ENCODE measurements at regions of chr6 and their contacts with region 1.

Region 1: DNA sequence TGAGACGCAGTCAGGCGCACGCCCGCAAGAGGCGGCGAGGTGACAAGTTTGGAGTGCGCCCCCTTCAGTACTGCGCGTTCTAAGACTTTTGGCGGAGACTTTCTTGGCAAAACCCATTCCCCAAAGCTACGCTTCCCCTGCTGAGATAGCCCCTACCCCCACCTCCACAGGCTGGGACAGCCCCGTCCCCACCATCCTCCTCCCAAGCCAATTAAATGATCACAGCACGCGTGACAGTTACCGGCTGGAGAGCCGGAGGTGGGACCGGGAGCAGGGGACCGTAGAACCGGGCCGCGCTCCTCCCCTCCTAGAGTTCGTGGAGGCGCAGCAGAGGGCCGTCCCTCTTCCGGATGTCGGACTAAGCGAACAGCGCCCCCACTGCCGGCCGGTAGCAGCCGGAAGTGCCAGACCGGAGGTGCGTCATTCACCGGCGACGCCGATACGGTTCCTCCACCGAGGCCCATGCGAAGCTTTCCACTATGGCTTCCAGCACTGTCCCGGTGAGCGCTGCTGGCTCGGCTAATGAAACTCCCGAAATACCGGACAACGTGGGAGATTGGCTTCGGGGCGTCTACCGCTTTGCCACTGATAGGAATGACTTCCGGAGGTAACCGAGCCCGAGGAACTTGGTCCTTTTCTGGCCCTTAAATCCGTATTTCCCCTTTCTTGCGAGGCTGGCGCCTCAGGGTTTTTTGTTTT is at the start of gene TOMM6:
- DNase-seq: peak; percentile 98
- ATAC-seq: peak; percentile 84
- H3K4me3 ChIP-seq: peak within 1 kb of the TSS; percentile 85 to 99 (median 91)
- H3K4me3 Mint-ChIP-seq: peak within 1 kb of the TSS; percentile 97
- H3K27ac ChIP-seq: peak within 1 kb of the TSS; percentile 75 to 95
- H3K27ac Mint-ChIP-seq: peak within 1 kb of the TSS; percentile 98
- H3K4me1 ChIP-seq: peaks cover 17 to 27% of the 10 kb centered on the region in 2 donors
- H3K4me1 Mint-ChIP-seq: peaks cover 32% of the 10 kb centered on the region
- H3K27me3 ChIP-seq: no peaks in the 10 kb centered on the region
- H3K27me3 Mint-ChIP-seq: no peaks in the 10 kb centered on the region
- CTCF ChIP-seq: peak; percentile 85
- total RNA-seq, gene TOMM6: 117 and 130 TPM in 2 replicates

Region 2: DNA sequence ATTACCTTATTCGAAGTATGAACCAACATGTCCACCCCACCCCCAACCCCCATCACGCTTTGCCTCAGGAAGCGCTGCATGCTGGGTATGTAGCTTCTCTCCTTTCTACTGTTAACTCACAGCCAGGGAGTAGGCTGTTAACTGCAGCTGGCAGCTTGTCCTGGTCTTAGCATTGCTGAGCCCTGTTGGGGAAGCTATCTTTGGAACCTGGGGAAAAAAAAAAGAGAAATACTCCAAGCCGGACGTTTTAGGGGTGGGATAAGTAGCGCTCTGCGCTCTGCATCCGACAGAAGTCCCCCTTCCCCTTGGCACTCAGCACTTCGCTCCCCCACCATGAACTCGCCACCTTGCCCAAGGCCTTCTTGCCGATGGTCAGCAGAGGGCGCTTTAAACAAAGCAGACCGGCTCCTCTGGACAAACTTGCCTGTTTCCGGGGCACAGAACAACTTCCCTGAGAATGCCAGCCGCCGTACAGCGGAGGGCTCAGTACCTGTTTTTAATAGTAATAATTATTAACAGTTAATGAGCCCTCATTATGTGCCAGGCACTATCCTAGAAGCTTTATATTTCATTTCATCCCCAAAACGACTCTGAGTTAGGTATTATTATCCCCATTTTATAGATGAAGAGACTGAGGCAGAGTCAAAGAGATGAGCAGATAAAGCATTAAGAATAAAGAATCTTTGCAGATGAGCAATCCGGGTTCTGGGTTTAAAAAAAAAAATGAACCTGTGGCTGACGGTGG is 184.3 kb before region 1 on chr6:
- CTCF ChIA-PET with region 1: interaction called, 15 read pairs
- POLR2A ChIA-PET with region 1: no interaction called
- intact Hi-C with region 1: no loop called
- DNase-seq: peak; percentile 85
- ATAC-seq: peak; percentile 90
- H3K4me3 ChIP-seq: peak overlapping the region in 1 of 5 experiments; percentile 11
- H3K4me3 Mint-ChIP-seq: peak overlapping the region; percentile 41
- H3K27ac ChIP-seq: no peak overlapping the region
- H3K27ac Mint-ChIP-seq: no peak overlapping the region
- H3K4me1 ChIP-seq: peaks cover 4 to 13% of the 10 kb centered on the region in 2 donors
- H3K4me1 Mint-ChIP-seq: peaks cover 10% of the 10 kb centered on the region
- H3K27me3 ChIP-seq: peaks cover 0 to 3% (median 0%) of the 10 kb centered on the region in 4 experiments
- H3K27me3 Mint-ChIP-seq: peaks cover 11% of the 10 kb centered on the region
- CTCF ChIP-seq: peak; percentile 82

Region 3: DNA sequence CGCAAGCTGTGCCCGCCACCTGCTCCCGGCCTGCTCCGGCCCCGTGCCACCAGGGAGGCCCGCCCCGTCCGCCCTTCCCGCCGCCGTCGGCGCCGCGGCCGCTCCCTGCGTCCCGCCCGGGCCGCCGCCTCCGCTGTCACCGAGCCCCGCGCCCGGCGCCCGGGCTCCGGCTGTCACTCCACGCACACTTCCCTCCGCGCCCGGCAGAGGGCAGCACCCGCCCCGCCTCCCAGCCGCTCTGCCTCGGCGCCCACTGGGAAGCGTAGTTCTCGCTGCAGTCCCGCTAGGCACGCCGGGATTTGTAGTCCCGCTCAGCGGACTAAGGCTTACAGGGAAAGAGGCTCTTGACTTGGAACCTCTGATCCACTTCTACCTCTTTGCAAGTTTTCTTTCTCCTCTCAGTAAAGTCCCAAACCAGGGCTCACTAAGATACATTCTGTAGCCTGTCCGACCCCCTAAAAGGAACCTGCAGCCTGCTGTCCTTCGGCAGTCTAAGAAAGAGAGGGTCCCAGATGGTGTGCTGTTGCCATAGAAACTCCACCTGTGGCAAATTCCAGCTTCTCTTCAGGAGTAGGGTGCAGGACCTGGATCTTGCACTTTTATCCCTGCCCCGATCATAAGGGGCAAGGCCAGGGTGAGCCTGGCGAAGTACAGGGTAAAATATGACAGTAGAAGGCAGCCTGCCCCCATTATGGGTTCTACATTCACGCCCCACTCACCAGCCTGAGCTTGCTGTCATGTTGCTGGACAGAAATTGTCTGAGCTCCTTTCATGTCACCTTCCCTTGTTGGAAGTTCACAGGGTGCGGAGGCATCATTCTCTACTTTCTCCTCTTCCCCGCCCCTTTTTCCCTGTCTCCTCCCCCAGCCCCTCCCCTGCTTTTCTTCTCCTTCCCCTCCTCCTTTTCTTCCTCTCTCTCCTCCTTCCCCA is 51.7 kb before region 1 on chr6 and contains the start of gene TFEB:
- CTCF ChIA-PET with region 1: interaction called, 17 read pairs
- POLR2A ChIA-PET with region 1: interaction called, 16 read pairs
- intact Hi-C with region 1: loop called (anchors 1 kb)
- DNase-seq: peak; percentile 94
- ATAC-seq: peak; percentile 51
- H3K4me3 ChIP-seq: peak within 1 kb of the TSS in 4 of 5 experiments; percentile 68 to 89 (median 80)
- H3K4me3 Mint-ChIP-seq: peak within 1 kb of the TSS; percentile 93
- H3K27ac ChIP-seq: peak within 1 kb of the TSS; percentile 81 to 89
- H3K27ac Mint-ChIP-seq: peak within 1 kb of the TSS; percentile 95
- H3K4me1 ChIP-seq: peaks cover 23 to 36% of the 10 kb centered on the region in 2 donors
- H3K4me1 Mint-ChIP-seq: peaks cover 32% of the 10 kb centered on the region
- H3K27me3 ChIP-seq: no peaks in the 10 kb centered on the region
- H3K27me3 Mint-ChIP-seq: no peaks in the 10 kb centered on the region
- CTCF ChIP-seq: peak; percentile 80
- total RNA-seq, gene TFEB: 147 and 148 TPM in 2 replicates

Region 4: GRCh38 chr6:41920921-41921711 is 133.7 kb after region 1 on chr6 and contains the starts of genes BYSL and MED20:
- CTCF ChIA-PET with region 1: interaction called, 68 read pairs
- POLR2A ChIA-PET with region 1: interaction called, 7 read pairs
- intact Hi-C with region 1: loop called (anchors 1 kb)
- DNase-seq: peak; percentile 98
- ATAC-seq: peak; percentile 93
- H3K4me3 ChIP-seq: peak within 1 kb of the TSS; percentile 67 to 99 (median 97)
- H3K4me3 Mint-ChIP-seq: peak within 1 kb of the TSS; percentile 98
- H3K27ac ChIP-seq: peak within 1 kb of the TSS; percentile 91 to 96
- H3K27ac Mint-ChIP-seq: peak within 1 kb of the TSS; percentile 98
- H3K4me1 ChIP-seq: peaks cover 26 to 29% of the 10 kb centered on the region in 2 donors
- H3K4me1 Mint-ChIP-seq: peaks cover 47% of the 10 kb centered on the region
- H3K27me3 ChIP-seq: no peaks in the 10 kb centered on the region
- H3K27me3 Mint-ChIP-seq: no peaks in the 10 kb centered on the region
- CTCF ChIP-seq: peak; percentile 93
- total RNA-seq, gene BYSL: 10.5 and 11.1 TPM in 2 replicates
- total RNA-seq, gene MED20: 18.2 and 24.2 TPM in 2 replicates

Region 5: DNA sequence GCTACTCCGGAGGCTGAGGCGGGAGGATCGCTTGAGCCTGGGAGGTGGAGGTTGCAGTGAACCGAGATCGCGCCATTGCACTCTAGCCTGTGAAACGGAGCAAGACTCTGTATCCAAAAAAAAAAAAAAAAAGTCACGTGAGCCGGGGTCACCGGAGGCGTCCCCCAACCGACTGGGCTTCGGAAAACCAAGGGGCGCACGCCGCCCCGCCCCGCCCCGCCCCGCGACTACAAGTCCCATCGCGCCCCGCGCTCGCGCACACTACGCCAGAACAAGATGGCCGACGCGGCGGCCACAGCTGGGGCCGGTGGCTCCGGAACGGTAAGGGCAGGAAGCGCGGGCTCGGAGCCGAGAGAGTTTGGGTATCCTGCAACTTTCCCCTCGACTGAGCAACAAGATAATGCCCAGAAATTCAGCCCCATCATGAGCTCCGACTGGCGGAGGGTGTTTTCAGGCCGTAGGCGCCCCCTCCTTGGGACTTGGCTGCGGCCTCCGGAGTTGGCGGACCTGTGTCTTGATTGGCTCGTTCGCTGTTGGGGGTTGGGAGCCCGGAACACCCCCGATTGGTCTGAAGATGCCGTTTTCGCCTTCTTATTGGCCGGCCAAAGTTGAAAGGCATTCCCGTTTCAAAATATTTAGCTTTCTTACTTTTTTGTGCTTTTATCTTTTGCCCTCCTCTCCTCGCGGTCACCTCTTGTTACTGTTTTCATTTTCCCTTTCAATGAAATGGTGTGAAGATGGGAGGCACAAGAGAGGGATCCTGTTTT is 263.1 kb after region 1 on chr6 and contains the start of gene TAF8:
- CTCF ChIA-PET with region 1: interaction called, 198 read pairs
- POLR2A ChIA-PET with region 1: interaction called, 36 read pairs
- intact Hi-C with region 1: loop called (anchors 1 kb)
- DNase-seq: peak; percentile 95
- ATAC-seq: peak; percentile 69
- H3K4me3 ChIP-seq: peak within 1 kb of the TSS; percentile 86 to 100 (median 93)
- H3K4me3 Mint-ChIP-seq: peak within 1 kb of the TSS; percentile 99
- H3K27ac ChIP-seq: peak within 1 kb of the TSS; percentile 78 to 81
- H3K27ac Mint-ChIP-seq: peak within 1 kb of the TSS; percentile 99
- H3K4me1 ChIP-seq: peaks cover 43 to 45% of the 10 kb centered on the region in 2 donors
- H3K4me1 Mint-ChIP-seq: peaks cover 61% of the 10 kb centered on the region
- H3K27me3 ChIP-seq: no peaks in the 10 kb centered on the region
- H3K27me3 Mint-ChIP-seq: no peaks in the 10 kb centered on the region
- CTCF ChIP-seq: no peak
- total RNA-seq, gene TAF8: 62.1 and 67.0 TPM in 2 replicates

Region 6: DNA sequence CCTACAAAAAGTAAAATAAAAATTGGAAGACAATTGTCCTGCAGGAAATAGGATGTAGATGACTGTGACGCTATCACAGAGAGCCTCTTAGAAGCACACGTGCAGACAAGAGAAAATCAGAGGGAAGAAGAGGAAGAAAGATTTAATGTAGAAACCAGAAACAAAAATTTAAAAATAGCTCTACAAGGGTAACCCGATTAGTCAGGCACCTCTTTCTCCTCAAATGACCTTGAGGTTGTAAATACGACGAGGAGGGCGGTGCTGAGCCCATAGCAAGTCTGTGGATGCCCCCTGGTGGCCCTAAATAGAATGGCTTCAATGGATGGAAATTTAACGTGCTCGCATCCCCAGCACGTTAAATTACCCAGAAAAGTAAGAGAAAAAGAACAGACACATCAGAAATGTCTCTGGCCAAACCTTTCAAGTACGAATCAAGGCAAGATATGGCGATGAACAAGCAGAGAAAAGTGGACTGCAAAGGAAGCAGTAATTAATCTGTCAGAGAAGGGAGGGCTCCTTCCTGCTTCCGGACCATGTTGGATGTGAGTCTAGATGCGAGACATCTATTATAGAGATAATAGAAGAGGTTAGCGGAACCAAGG is 939.2 kb after region 1 on chr6:
- CTCF ChIA-PET with region 1: no interaction called
- POLR2A ChIA-PET with region 1: no interaction called
- intact Hi-C with region 1: loop called (anchors 10 kb)
- DNase-seq: peak; percentile 92
- ATAC-seq: peak; percentile 99
- H3K4me3 ChIP-seq: peak overlapping the region; percentile 57 to 76 (median 68)
- H3K4me3 Mint-ChIP-seq: peak overlapping the region; percentile 92
- H3K27ac ChIP-seq: peak overlapping the region; percentile 59 to 64
- H3K27ac Mint-ChIP-seq: peak overlapping the region; percentile 94
- H3K4me1 ChIP-seq: peaks cover 12 to 17% of the 10 kb centered on the region in 2 donors
- H3K4me1 Mint-ChIP-seq: peaks cover 19% of the 10 kb centered on the region
- H3K27me3 ChIP-seq: no peaks in the 10 kb centered on the region
- H3K27me3 Mint-ChIP-seq: no peaks in the 10 kb centered on the region
- CTCF ChIP-seq: peak; percentile 94

Measured in B cell (primary cell).